Right ventricle myocardium inferior (tissue), 1 donor: ENCODE measurements at regions of chr2 and their contacts with region 1.

Region 1: DNA sequence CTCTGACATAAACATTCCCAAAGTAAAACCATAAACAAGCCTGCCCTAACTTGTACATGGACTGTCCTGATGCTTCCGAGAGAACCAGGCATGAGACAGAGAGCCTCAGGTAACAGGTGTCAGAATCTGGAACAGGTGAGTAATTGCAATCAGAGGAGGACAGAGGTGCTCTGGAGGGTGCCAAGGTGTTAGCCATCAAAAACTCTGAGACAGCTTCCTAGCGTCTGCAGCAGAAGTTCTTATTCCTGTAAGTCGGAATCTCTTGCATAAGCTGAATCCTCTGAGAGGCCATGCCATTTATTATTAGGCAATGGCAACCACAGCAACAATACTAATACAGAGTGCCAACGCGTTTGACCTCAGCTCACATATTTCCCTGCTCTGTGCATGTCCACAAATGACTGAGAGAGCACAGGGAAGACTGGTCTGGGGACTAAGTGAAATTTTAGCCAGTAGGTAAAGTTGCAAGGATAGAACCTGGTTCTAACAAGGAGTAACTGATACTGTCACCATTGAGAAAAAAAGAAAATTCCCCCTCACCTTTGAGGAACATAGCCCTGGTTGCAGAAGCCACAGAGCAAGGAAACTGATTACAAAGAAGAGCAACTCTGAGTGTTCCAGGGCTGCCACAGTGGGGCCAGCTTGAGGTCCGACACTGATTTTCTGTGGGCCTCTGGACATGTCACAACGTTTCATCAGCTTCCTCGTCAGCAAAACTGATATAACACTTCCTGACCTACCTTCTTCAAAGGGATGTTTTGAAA is 55.1 kb upstream of the ACSL3 start:
- DNase-seq: no peak
- ATAC-seq: peak; percentile 93

Region 2: DNA sequence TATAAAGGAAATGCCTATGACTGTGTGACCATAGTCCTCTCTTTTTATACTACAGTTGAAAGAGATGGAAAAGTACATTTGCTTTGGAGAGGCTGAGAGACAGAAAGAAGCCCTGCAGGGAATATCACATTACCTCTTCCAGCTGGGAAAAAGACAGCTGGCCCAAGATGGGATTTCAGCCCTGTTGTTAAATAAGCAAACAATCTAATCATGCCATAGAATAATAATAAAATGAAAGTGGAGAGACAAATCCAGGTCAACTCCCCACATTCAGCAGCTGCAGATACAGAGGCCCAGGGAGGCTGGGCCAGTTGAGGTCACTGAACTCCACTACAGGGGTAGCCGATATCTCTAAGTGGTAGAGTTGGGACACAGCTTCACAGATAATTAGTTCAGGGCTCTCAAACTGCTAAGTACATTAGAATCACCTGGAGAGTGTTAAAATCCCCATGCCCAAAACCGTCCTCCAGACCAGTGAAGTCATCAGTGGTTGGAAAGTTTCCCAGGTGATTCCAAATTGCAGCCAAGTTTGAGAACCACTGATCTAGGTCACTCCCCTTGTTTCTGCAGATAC is 52.4 kb before region 1 on chr2:
- intact Hi-C with region 1: loop called (anchors 10 kb)
- DNase-seq: no peak
- ATAC-seq: peak; percentile 96